ENCODE measurements at regions of chrX and their contacts with region 1.

Region 1: GRCh38 chrX:50747471-50747900 is 66.5 kb downstream of the SHROOM4 start:
- DNase-seq: no peak
- H3K4me3 ChIP-seq: no peak overlapping the region
- H3K27ac ChIP-seq: no peak overlapping the region
- H3K4me1 ChIP-seq: peaks cover 0 to 7% (median 0%) of the 10 kb centered on the region in 4 donors
- H3K27me3 ChIP-seq: no peaks in the 10 kb centered on the region
- CTCF ChIP-seq: peak in 3 of 4 experiments; percentile 20 to 57 (median 55)
- EP300 ChIP-seq: no peak
- POLR2A ChIP-seq: no peak

Region 2: DNA sequence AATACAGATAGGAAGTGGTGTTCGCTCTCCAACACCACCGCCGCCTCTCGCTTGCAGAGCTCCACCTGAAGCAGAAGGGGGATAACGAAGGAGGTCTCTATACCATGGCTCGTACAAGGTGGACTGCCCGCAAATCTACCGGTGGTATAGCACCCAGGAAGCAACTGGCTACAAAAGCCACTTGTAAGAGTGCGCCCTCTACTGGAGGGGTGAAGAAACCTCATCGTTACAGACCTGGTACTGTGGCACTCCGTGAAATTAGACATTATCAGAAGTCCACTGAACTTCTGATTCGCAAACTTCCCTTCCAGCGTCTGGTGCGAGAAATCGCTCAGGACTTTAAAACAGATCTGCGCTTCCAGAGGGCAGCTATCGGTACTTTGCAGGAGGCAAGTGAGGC is 157.8 kb after region 1 on chrX:
- intact Hi-C with region 1: loop called (anchors 5 kb)
- DNase-seq: no peak
- H3K4me3 ChIP-seq: no peak overlapping the region
- H3K27ac ChIP-seq: no peak overlapping the region
- H3K4me1 ChIP-seq: no peaks in the 10 kb centered on the region
- H3K27me3 ChIP-seq: no peaks in the 10 kb centered on the region
- CTCF ChIP-seq: no peak
- EP300 ChIP-seq: no peak
- POLR2A ChIP-seq: no peak

Region 3: DNA sequence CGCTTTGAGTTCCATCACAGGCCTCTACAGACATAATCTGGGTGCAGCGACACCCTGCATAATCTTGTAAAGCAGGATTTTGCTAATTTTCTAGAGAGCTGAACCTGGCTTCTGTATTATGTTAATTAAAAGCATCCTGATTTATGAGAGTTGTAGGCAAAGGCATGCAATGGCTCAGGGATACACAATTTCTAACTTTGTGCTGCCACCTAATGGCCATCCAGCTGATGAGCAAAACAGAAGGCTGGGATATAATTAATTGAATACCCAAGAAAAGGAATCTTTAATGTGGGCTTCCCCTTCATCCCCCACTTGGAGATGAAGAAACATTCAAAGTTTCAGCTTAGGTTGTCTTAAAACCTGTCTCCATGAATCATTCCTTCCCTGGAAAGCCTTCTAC is 241.2 kb after region 1 on chrX:
- intact Hi-C with region 1: loop called (anchors 10 kb)
- DNase-seq: no peak
- H3K4me3 ChIP-seq: no peak overlapping the region
- H3K27ac ChIP-seq: no peak overlapping the region
- H3K4me1 ChIP-seq: no peaks in the 10 kb centered on the region
- H3K27me3 ChIP-seq: no peaks in the 10 kb centered on the region
- CTCF ChIP-seq: peak in 2 of 4 experiments; percentile 9 to 36
- EP300 ChIP-seq: no peak
- POLR2A ChIP-seq: no peak